ENCODE measurements at regions of chr5 and their contacts with region 1.

Region 1: GRCh38 chr5:122534829-122535228 is 222.8 kb downstream of the SNCAIP start:
- DNase-seq: no peak
- ATAC-seq: no peak
- H3K4me3 ChIP-seq: no peak overlapping the region
- H3K27ac ChIP-seq: no peak overlapping the region
- H3K4me1 ChIP-seq: peaks cover 0 to 4% (median 0%) of the 10 kb centered on the region in 9 donors
- H3K27me3 ChIP-seq: peaks cover 0 to 40% (median 17%) of the 10 kb centered on the region in 7 donors
- CTCF ChIP-seq: no peak

Region 2: DNA sequence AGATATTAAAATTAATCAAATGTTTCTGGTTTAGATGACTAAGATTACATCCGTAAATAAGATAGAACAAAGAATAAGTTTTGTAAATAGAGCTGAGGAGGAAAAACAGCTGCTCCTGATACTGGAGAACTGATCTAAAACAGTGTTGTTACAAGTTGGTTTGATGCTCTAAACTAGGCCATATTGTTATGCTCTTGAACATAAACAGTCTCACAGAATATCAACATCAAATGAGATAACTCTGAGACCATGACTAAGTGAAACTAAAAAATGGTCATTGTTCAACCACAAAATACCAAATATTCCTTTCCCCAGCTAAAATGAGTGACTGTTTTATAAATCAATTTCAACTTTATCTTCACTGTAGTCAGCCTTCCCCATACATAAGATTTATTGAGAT is 589.6 kb before region 1 on chr5:
- intact Hi-C with region 1: no loop called
- DNase-seq: no peak
- ATAC-seq: no peak
- H3K4me3 ChIP-seq: no peak overlapping the region
- H3K27ac ChIP-seq: no peak overlapping the region
- H3K4me1 ChIP-seq: no peaks in the 10 kb centered on the region
- H3K27me3 ChIP-seq: peaks cover 0 to 5% (median 0%) of the 10 kb centered on the region in 7 donors
- CTCF ChIP-seq: no peak

Region 3: DNA sequence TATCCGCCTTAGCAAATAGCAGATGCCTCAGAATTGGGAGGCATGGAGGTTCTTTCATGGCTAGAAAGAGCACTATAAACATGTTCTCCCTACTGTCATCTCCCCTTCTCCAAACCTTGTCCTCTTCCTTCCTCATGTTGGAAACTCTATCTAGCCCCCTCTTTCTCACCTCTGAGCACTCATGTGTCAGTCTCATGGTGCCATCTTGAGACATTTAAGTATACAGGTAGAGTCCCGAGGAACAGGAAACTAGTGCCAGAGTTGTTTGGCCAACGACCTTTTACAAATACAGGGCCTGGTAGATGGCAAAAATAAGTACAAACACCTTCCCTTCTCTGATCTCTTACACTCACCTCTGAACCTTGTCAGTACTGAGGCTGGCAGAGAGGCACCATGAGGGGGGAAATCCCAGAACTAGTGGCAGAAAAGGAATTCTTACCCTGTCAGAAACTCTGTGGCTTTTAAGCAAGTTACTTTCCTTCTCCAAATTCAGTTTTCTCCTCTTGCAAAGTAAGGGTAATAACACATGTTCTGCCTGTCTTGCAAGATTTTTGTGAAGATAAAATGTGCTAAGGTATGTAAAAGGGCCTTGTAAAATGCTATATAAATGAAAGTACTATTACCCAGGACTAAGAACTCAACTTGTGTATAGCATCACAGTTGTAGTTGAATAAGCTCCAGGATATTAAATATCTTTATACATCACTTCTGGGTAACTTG is 146.0 kb after region 1 on chr5:
- intact Hi-C with region 1: loop called in 1 of 10 experiments (anchors 5 kb)
- DNase-seq: no peak
- ATAC-seq: no peak
- H3K4me3 ChIP-seq: no peak overlapping the region
- H3K27ac ChIP-seq: no peak overlapping the region
- H3K4me1 ChIP-seq: no peaks in the 10 kb centered on the region
- H3K27me3 ChIP-seq: peaks cover 0 to 5% (median 0%) of the 10 kb centered on the region in 7 donors
- CTCF ChIP-seq: no peak